OCI-LY7 (cell line): ENCODE measurements at regions of chr4 and their contacts with region 1.

Region 1: GRCh38 chr4:86977621-86978184 is 42.9 kb downstream of the AFF1 start:
- DNase-seq: no peak
- H3K4me3 ChIP-seq: peak overlapping the region; percentile 28
- H3K27ac ChIP-seq: peak overlapping the region; percentile 1
- H3K4me1 ChIP-seq: peaks cover 85% of the 10 kb centered on the region
- CTCF ChIP-seq: no peak

Region 2: GRCh38 chr4:86993909-86994681 is 16.4 kb after region 1 on chr4:
- CTCF ChIA-PET with region 1: interaction called, 4 read pairs
- POLR2A ChIA-PET with region 1: interaction called, 14 read pairs
- intact Hi-C with region 1: no loop called
- DNase-seq: peak; percentile 40
- H3K4me3 ChIP-seq: no peak overlapping the region
- H3K27ac ChIP-seq: peak overlapping the region; percentile 70
- H3K4me1 ChIP-seq: peaks cover 65% of the 10 kb centered on the region
- CTCF ChIP-seq: no peak

Region 3: DNA sequence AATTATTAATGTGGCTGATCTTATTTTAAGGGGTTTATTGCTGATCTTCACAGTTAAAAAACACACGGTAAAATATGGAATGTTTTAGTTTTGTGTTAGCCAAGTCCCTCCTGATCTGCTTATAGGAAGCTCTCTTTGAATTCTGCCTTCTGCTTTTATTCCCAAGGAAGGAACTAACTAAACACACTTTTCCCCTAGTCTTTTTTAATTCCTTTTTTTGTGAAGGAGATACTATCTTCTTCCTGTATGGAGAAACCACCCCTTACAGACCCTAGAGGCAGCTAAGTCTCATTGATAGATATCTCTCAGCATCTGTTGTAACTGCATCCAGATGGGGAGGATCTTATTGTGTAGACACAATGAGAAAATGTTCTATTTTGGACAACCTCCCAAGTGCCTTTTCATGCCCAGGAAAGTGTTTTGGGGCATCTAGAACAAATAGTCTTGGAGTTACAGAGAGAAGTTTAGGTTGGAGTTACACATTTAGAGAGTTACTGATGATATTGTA is 21.5 kb after region 1 on chr4:
- CTCF ChIA-PET with region 1: interaction called, 4 read pairs
- POLR2A ChIA-PET with region 1: interaction called, 10 read pairs
- intact Hi-C with region 1: no loop called
- DNase-seq: no peak
- H3K4me3 ChIP-seq: peak overlapping the region; percentile 55
- H3K27ac ChIP-seq: peak overlapping the region; percentile 96
- H3K4me1 ChIP-seq: peaks cover 77% of the 10 kb centered on the region
- CTCF ChIP-seq: no peak